Tibial artery (tissue), 4 donors: ENCODE measurements at regions of chr3 and their contacts with region 1.

Region 1: GRCh38 chr3:16286161-16286560 is 21.1 kb downstream of the OXNAD1 start:
- DNase-seq: no peak
- H3K4me3 ChIP-seq: no peak overlapping the region
- H3K27ac ChIP-seq: no peak overlapping the region
- H3K4me1 ChIP-seq: peaks cover 0 to 21% (median 7%) of the 10 kb centered on the region in 4 donors
- H3K27me3 ChIP-seq: no peaks in the 10 kb centered on the region
- CTCF ChIP-seq: no peak

Region 2: GRCh38 chr3:16056210-16056607 is 230.0 kb before region 1 on chr3:
- intact Hi-C with region 1: no loop called
- DNase-seq: peak; percentile 86 to 88
- H3K4me3 ChIP-seq: no peak overlapping the region
- H3K27ac ChIP-seq: peak overlapping the region; percentile 81 to 87
- H3K4me1 ChIP-seq: peaks cover 0 to 90% (median 45%) of the 10 kb centered on the region in 4 donors
- H3K27me3 ChIP-seq: no peaks in the 10 kb centered on the region
- CTCF ChIP-seq: no peak

Region 3: DNA sequence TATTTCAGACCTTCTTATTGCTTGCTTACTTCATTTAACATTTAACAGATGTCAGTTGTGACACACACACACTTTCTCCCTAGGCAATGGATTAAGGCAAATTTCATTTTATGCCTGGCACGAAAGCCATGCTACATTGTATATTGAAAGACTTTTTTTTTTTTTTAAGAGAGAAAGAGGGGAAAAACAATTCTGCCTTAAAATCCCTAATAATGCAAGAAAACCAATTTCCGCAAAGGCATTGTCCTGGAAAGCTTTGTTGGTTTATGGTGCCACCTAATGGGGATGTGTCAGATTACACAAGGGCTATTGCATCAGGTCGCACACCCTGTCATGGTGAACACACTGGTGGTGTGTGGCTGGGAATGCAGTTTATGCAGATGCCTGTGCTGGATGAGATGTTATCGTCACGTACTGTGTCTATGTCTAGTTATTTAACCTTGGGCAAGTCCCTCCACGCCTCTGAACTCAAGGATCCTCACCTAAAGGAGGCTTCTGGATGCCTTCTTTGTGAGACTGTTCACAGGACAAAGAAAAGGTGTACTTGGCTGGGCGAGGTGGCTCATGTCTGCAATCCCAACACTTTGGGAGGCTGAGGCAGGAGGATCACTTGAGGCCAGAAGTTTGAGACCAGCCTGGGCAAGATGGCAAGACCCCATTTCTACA is 264.6 kb after region 1 on chr3:
- intact Hi-C with region 1: loop called (anchors 5 kb)
- DNase-seq: peak in 1 of 2 donors; percentile 73
- H3K4me3 ChIP-seq: no peak overlapping the region
- H3K27ac ChIP-seq: no peak overlapping the region
- H3K4me1 ChIP-seq: peaks cover 0 to 5% (median 3%) of the 10 kb centered on the region in 4 donors
- H3K27me3 ChIP-seq: no peaks in the 10 kb centered on the region
- CTCF ChIP-seq: peak; percentile 85 to 90